ENCODE measurements at regions of chrX and their contacts with region 1.

Region 1: GRCh38 chrX:76454456-76454927 is 27.0 kb downstream of the MAGEE1 start:
- DNase-seq: peak; percentile 63
- H3K4me3 Mint-ChIP-seq: no peak overlapping the region
- H3K27ac Mint-ChIP-seq: no peak overlapping the region
- H3K4me1 Mint-ChIP-seq: no peaks in the 10 kb centered on the region
- H3K27me3 Mint-ChIP-seq: no peaks in the 10 kb centered on the region

Region 2: DNA sequence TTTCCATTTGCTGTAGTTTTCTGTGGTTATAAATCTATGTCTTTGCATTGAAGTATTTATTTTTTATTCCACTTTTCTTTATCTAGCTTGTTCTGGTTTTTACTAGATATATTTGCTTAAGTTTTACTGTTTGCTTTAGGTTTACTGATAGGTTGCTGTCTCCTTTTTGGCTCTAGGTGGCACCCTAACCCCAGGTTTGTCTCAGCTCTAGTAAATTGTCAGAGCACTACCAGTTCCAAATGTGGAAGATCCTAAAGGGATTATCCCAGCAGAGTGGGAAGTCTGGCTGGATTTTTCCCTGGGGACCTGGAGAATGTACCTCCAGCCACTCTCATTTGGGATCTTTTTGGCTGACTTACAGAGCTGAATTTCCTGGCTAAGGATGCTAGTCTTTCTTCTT is 175.5 kb before region 1 on chrX:
- intact Hi-C with region 1: loop called (anchors 1 kb)
- DNase-seq: peak; percentile 78
- H3K4me3 Mint-ChIP-seq: no peak overlapping the region
- H3K27ac Mint-ChIP-seq: no peak overlapping the region
- H3K4me1 Mint-ChIP-seq: no peaks in the 10 kb centered on the region
- H3K27me3 Mint-ChIP-seq: no peaks in the 10 kb centered on the region

Region 3: DNA sequence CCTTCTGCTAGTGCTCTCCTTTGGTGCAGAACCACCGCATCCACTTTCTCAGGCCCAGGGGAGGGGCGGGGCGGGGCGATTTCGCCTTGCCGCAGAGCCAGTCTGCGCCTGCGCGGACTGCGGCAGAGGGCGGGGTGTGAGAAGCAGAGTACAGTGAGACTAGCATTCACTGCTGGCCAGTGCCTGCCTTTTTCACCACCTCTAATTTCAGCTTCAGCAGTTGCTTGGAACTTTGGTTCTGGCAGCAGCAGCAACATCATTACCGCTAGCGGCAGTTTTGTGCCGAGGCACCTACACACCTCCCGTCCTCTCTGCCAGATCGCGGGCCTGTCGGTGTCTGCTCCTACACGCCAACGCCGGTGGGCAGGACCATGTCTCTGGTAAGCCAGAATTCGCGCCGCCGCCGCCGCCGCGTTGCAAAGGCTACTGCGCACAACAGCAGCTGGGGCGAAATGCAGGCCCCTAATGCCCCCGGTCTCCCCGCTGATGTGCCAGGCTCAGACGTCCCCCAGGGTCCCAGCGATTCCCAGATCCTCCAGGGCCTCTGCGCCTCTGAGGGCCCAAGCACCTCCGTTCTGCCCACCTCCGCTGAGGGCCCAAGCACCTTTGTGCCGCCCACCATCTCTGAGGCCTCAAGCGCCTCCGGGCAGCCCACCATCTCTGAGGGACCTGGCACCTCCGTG is 26.8 kb before region 1 on chrX and contains the start of gene MAGEE1:
- intact Hi-C with region 1: no loop called
- DNase-seq: peak; percentile 92
- H3K4me3 Mint-ChIP-seq: peak within 1 kb of the TSS; percentile 88
- H3K27ac Mint-ChIP-seq: peak within 1 kb of the TSS; percentile 83
- H3K4me1 Mint-ChIP-seq: peaks cover 7% of the 10 kb centered on the region
- H3K27me3 Mint-ChIP-seq: no peaks in the 10 kb centered on the region
- total RNA-seq, gene MAGEE1: 1.8 and 2.0 TPM in 2 replicates